ENCODE measurements at regions of chr1 and their contacts with region 1.

Region 1: GRCh38 chr1:92298573-92299476 is at the starts of genes GLMN and RPAP2:
- DNase-seq: peak; percentile 81 to 85
- H3K4me3 ChIP-seq: peak within 1 kb of the TSS; percentile 83
- H3K4me1 ChIP-seq: peaks cover 19% of the 10 kb centered on the region
- H3K27me3 ChIP-seq: no peaks in the 10 kb centered on the region

Region 2: GRCh38 chr1:91500756-91501522 is 797.9 kb before region 1 on chr1 and contains the start of gene CDC7:
- in situ Hi-C with region 1: loop called (anchors 25 kb)
- DNase-seq: peak; percentile 88 to 96
- H3K4me3 ChIP-seq: peak within 1 kb of the TSS; percentile 60
- H3K4me1 ChIP-seq: peaks cover 33% of the 10 kb centered on the region
- H3K27me3 ChIP-seq: no peaks in the 10 kb centered on the region

Region 3: GRCh38 chr1:92944901-92945747 is 646.3 kb after region 1 on chr1:
- in situ Hi-C with region 1: no loop called
- DNase-seq: no peak
- H3K4me3 ChIP-seq: no peak overlapping the region
- H3K4me1 ChIP-seq: no peaks in the 10 kb centered on the region
- H3K27me3 ChIP-seq: peaks cover 40% of the 10 kb centered on the region

Measured in HAP-1 (cell line).